PC-9 (cell line): ENCODE measurements at regions of chr12 and their contacts with region 1.

Region 1: GRCh38 chr12:67648521-67649260 is at the start of gene DYRK2:
- DNase-seq: peak; percentile 54 to 79
- H3K4me3 ChIP-seq: peak within 1 kb of the TSS; percentile 91
- H3K27ac ChIP-seq: peak within 1 kb of the TSS; percentile 98
- H3K4me1 ChIP-seq: peaks cover 61% of the 10 kb centered on the region
- H3K27me3 ChIP-seq: no peaks in the 10 kb centered on the region
- CTCF ChIP-seq: no peak
- total RNA-seq, gene DYRK2: 42.9 and 55.6 TPM in 2 replicates

Region 2: GRCh38 chr12:67441736-67442346 is 206.8 kb before region 1 on chr12:
- CTCF ChIA-PET with region 1: no interaction called
- POLR2A ChIA-PET with region 1: no interaction called
- intact Hi-C with region 1: loop called (anchors 2 kb)
- DNase-seq: peak in 1 of 2 experiments; percentile 77
- H3K4me3 ChIP-seq: no peak overlapping the region
- H3K27ac ChIP-seq: no peak overlapping the region
- H3K4me1 ChIP-seq: no peaks in the 10 kb centered on the region
- H3K27me3 ChIP-seq: no peaks in the 10 kb centered on the region
- CTCF ChIP-seq: peak; percentile 57

Region 3: DNA sequence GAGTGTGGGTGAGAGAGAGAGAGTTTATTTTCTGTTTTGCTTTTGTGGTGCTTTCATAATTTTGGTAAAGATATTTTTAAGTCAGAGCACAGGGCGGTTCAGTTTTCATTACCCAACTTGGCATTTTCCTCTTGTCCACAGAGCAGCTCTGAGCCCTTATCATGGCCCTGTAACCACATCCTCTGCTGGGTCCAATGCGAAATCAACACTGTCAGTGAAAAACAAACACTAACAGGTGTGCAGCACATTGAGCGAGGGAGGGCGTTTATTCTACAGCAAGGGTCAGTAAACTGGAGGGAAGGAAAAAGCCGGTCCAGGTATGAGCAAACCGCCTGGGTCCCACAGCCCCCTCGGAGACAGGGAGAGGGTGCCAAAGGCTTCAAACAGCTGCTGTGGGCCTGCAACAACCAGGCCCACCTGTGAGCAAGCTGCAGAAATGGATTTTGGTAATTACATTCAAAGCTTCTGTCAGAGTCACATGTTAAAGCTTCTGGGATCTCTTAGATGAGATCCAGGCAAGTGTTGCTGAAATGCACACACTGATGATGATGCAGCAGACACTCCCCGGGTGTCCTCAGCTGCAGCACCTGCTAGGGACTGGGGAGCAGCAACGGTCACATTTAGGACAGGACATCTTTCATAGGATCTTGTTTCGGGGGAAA is 132.9 kb before region 1 on chr12:
- CTCF ChIA-PET with region 1: no interaction called
- POLR2A ChIA-PET with region 1: interaction called, 8 read pairs
- intact Hi-C with region 1: loop called (anchors 1 kb)
- DNase-seq: peak; percentile 3 to 70
- H3K4me3 ChIP-seq: no peak overlapping the region
- H3K27ac ChIP-seq: peak overlapping the region; percentile 70; the same call in 1 of the 2 replicates
- H3K4me1 ChIP-seq: peaks cover 48% of the 10 kb centered on the region
- H3K27me3 ChIP-seq: no peaks in the 10 kb centered on the region
- CTCF ChIP-seq: no peak

Region 4: GRCh38 chr12:67592216-67593011 is 56.3 kb before region 1 on chr12:
- CTCF ChIA-PET with region 1: no interaction called
- POLR2A ChIA-PET with region 1: interaction called, 3 read pairs
- intact Hi-C with region 1: loop called (anchors 5 kb)
- DNase-seq: peak; percentile 29 to 61
- H3K4me3 ChIP-seq: peak overlapping the region; percentile 28; the same call in 1 of the 2 replicates
- H3K27ac ChIP-seq: peak overlapping the region; percentile 98
- H3K4me1 ChIP-seq: peaks cover 47% of the 10 kb centered on the region
- H3K27me3 ChIP-seq: no peaks in the 10 kb centered on the region
- CTCF ChIP-seq: no peak

Region 5: DNA sequence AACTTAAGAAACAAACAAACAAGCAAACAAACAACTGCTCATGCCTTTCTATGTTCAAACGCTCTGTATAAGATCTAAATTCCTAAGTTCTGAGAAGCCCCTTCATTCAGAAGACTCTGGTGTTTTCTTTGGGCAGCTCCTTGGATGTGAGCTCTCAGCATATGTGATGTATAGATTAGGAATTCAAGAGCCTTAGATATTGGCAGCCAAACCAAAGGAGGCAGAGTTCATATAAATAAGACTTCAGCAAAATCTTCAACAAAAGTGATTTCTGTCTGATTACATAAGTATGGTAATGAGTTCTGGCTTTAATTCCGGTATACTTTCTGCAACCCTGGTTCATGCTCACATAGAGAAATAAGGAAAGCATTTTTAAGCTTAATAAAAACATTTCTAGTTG is 145.5 kb after region 1 on chr12:
- CTCF ChIA-PET with region 1: no interaction called
- POLR2A ChIA-PET with region 1: no interaction called
- intact Hi-C with region 1: no loop called
- DNase-seq: no peak
- H3K4me3 ChIP-seq: no peak overlapping the region
- H3K27ac ChIP-seq: no peak overlapping the region
- H3K4me1 ChIP-seq: peaks cover 11% of the 10 kb centered on the region
- H3K27me3 ChIP-seq: no peaks in the 10 kb centered on the region
- CTCF ChIP-seq: no peak

Region 6: GRCh38 chr12:67928621-67929388 is 280.1 kb after region 1 on chr12:
- CTCF ChIA-PET with region 1: no interaction called
- POLR2A ChIA-PET with region 1: no interaction called
- intact Hi-C with region 1: loop called (anchors 5 kb)
- DNase-seq: no peak
- H3K4me3 ChIP-seq: no peak overlapping the region
- H3K27ac ChIP-seq: no peak overlapping the region
- H3K4me1 ChIP-seq: peaks cover 22% of the 10 kb centered on the region
- H3K27me3 ChIP-seq: no peaks in the 10 kb centered on the region
- CTCF ChIP-seq: no peak